Colonic mucosa (tissue), 4 donors: ENCODE measurements at regions of chr7 and their contacts with region 1.

Region 1: DNA sequence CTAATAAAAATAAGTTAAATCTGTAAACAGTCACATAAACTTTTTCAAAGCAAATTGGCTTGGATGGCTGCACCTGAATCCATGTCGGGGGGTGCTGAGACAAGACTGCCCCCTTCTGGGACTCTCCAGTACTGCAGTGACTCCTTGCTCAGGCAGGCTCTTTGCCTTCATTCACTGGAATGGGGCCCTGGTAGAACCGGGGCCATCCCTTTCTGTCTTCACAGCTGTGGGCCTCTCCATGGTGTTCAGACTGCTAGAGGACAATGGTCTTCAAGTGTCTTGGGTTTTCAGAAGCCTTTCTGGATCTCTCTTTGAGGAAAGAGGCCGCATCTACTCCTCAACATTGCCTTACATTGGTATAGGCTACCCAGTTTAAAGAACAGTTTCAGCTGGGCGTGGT is 16.1 kb upstream of the IMPDH1 start:
- DNase-seq: peak; percentile 84
- H3K4me3 ChIP-seq: no peak overlapping the region
- H3K27ac ChIP-seq: no peak overlapping the region
- H3K4me1 ChIP-seq: no peaks in the 10 kb centered on the region
- H3K27me3 ChIP-seq: no peaks in the 10 kb centered on the region
- CTCF ChIP-seq: peak; percentile 95

Region 2: DNA sequence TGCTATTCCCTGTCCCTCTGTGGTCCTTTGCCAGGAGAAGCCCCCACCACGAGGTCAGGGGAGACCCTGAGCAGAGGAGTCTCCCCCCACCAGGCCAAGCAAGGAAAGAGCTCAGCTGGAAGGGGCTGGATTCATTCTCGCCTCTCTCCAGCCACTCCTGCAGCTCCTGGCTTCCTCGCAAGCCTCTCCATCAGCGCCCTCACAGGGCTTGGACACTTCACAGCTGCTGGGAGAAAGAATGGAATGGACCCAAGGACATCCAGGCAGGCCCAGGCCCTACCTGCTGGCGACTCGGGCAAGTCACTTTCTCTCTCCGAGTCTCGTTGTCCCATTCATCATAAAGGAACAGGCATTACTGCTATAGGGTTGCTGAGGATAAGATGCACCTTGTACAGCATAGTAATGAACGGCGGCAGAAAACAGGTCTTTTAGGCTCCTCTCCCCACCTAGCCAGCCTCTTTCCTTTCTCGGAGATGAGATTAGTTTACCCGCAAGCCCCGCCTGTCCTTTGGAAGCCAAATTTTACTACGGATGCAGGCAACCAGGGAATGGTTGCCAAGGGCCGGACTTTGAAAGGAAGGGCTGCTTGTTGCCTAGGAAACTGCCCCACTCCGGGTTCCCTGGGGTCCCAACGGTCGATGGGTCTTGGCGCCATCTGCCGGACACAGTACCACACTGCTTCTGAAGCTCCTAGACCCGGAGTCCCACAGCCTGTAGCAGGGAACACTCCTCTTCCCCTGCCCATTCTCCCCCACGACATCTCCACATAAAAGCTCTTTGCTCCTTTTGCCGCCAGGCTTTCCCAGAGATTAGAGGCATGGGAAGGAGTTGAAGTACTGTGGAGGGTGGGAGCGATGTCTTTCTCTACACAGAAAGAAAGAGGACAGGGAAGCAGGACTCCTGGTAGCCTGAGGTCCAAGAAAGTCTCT is 38.4 kb before region 1 on chr7:
- intact Hi-C with region 1: no loop called
- DNase-seq: peak; percentile 73
- H3K4me3 ChIP-seq: no peak overlapping the region
- H3K27ac ChIP-seq: no peak overlapping the region
- H3K4me1 ChIP-seq: no peaks in the 10 kb centered on the region
- H3K27me3 ChIP-seq: no peaks in the 10 kb centered on the region
- CTCF ChIP-seq: peak; percentile 77

Region 3: GRCh38 chr7:128398016-128398840 is 27.6 kb before region 1 on chr7:
- intact Hi-C with region 1: loop called (anchors 1 kb)
- DNase-seq: peak; percentile 71
- H3K4me3 ChIP-seq: no peak overlapping the region
- H3K27ac ChIP-seq: no peak overlapping the region
- H3K4me1 ChIP-seq: no peaks in the 10 kb centered on the region
- H3K27me3 ChIP-seq: no peaks in the 10 kb centered on the region
- CTCF ChIP-seq: peak; percentile 93

Region 4: GRCh38 chr7:128455551-128456254 is 29.9 kb after region 1 on chr7 and contains the start of gene HILPDA:
- intact Hi-C with region 1: loop called (anchors 1 kb)
- DNase-seq: peak; percentile 92
- H3K4me3 ChIP-seq: peak within 1 kb of the TSS; percentile 78
- H3K27ac ChIP-seq: peak within 1 kb of the TSS; percentile 75
- H3K4me1 ChIP-seq: no peaks in the 10 kb centered on the region
- H3K27me3 ChIP-seq: no peaks in the 10 kb centered on the region
- CTCF ChIP-seq: no peak
- total RNA-seq, gene HILPDA: 12.1 to 31.4 TPM